AG04449 (cell line): ENCODE measurements at regions of chr17 and their contacts with region 1.

Region 1: GRCh38 chr17:74457146-74457819 is 9.2 kb upstream of the CD300A start:
- DNase-seq: no peak
- H3K4me3 ChIP-seq: no peak overlapping the region
- CTCF ChIP-seq: peak; percentile 92

Region 2: GRCh38 chr17:74296548-74296936 is 160.7 kb before region 1 on chr17:
- CTCF ChIA-PET with region 1: interaction called, 14 read pairs
- POLR2A ChIA-PET with region 1: no interaction called
- DNase-seq: no peak
- H3K4me3 ChIP-seq: no peak overlapping the region
- CTCF ChIP-seq: peak; percentile 63

Region 3: GRCh38 chr17:74362810-74363498 is 94.3 kb before region 1 on chr17:
- CTCF ChIA-PET with region 1: interaction called, 79 read pairs
- POLR2A ChIA-PET with region 1: no interaction called
- DNase-seq: no peak
- H3K4me3 ChIP-seq: no peak overlapping the region
- CTCF ChIP-seq: no peak

Region 4: GRCh38 chr17:74368092-74369081 is 88.9 kb before region 1 on chr17:
- CTCF ChIA-PET with region 1: interaction called, 79 read pairs
- POLR2A ChIA-PET with region 1: no interaction called
- DNase-seq: no peak
- H3K4me3 ChIP-seq: no peak overlapping the region
- CTCF ChIP-seq: peak; percentile 92

Region 5: DNA sequence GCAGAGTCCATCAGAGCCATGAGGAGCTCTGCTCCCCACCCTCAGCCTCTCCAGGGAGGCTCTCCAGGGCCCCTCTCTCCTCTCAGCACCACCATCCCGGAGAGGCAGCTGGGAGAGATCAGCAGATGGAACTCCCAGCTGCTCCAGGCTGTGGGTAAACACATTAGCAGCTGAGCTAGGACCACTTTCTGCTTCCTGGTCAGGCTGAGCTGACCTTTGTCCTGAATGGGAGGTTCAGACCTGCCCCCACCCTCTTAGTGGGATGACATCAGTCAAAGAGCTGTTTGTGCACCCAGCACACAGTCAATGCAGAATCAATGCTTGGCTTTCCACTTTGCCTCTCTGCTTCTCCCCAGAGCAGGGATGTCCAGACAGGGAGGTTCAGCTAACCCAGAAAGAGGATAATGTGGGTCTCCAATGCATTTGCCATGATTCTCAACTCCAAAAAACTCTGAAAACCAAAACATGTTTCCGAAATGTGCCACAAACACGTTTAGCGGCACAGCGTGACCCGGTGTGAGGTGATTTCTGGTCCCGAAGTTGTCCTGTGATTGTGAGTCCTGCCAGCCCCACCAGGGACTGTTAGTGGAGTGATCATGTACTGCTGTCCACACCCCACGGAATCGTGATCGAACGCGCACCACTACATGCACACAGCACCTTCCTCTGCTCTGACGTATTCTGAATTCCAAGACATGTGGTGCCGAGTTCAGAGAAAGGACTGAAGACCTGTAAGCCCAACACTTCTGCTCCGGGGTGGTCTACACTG is 83.3 kb before region 1 on chr17:
- CTCF ChIA-PET with region 1: interaction called, 79 read pairs
- POLR2A ChIA-PET with region 1: no interaction called
- DNase-seq: no peak
- H3K4me3 ChIP-seq: no peak overlapping the region
- CTCF ChIP-seq: no peak

Region 6: DNA sequence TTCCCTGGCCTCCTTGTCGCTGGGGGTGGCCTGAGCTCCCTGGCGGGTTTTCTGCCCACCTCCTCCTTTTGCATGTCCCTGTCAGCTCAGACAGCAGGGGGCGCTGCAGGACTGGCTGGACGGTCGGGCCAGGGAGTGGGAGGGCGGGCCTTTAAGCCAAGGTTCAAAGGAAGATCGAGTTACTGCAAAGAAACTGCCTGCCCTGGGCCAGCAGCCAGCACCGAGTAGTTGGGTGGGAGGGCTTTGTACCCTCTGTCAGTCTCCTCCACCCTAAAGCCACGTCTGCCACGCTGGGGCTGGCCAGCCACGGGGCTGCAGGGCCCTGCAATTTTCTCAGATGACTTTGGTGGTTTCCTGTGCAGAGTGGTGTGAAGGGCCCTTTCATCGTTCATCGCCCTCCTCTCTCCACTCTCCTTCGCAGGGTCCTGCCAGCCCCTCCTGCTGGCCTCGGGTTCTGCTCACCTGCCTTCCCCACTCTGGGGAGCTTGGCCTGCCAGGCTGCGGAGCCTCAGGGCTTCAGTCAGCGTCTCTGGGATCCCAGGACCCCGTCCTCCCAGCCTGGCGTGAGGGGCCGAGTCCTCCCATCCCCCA is 77.7 kb before region 1 on chr17:
- CTCF ChIA-PET with region 1: interaction called, 16 read pairs
- POLR2A ChIA-PET with region 1: no interaction called
- DNase-seq: no peak
- H3K4me3 ChIP-seq: no peak overlapping the region
- CTCF ChIP-seq: peak; percentile 94

Region 7: DNA sequence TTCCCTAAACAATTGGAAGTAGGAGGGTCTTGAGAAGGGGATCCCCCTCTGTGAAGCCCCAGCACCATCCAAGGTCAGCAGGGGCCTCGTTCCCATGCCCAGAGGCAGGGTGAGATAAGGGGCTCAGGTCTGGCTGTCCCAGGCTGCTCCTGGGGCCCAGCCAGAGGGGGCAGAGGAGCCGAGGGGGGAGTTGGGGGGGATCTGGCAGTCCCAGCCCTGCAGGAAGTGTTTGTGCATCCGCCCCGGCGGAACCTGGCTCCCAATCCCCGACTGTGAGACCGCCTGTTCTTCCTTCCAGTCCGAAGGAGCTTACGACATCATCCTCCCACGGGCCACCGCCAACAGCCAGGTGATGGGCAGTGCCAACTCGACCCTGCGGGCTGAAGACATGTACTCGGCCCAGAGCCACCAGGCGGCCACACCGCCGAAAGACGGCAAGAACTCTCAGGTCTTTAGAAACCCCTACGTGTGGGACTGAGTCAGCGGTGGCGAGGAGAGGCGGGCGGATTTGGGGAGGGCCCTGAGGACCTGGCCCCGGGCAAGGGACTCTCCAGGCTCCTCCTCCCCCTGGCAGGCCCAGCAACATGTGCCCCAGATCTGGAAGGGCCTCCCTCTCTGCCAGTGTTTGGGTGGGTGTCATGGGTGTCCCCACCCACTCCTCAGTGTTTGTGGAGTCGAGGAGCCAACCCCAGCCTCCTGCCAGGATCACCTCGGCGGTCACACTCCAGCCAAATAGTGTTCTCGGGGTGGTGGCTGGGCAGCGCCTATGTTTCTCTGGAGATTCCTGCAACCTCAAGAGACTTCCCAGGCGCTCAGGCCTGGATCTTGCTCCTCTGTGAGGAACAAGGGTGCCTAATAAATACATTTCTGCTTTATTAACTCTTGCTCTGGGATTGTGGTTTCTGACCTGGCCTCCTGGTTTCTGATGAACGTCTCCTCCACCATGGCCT is 10.5 kb before region 1 on chr17:
- CTCF ChIA-PET with region 1: interaction called, 23 read pairs
- POLR2A ChIA-PET with region 1: no interaction called
- DNase-seq: no peak
- H3K4me3 ChIP-seq: no peak overlapping the region
- CTCF ChIP-seq: no peak